H1 (cell line): ENCODE measurements at regions of chr9 and their contacts with region 1.

Region 1: DNA sequence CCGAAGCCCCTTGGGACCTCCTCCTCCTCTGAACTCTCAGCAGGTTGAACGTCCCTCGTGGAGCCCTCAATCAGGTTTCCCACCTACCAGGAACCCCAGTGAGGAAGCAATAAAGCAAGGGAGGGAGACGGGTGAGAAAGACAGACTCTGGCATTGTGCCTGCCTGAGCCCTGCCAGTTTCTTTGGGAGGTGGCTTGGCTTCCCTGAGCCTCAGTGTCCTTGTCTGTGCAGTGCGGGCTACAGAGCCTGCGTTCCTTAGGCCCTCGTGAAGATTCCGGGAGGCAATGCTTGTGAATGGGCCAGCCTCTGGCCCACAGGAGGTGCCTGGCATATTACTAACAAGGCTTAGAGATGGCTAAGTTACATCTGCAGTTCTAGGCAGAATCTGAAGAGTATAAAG is 11.9 kb downstream of the GTF3C5 start:
- DNase-seq: no peak
- H3K4me3 ChIP-seq: no peak overlapping the region
- H3K27ac ChIP-seq: no peak overlapping the region
- H3K4me1 ChIP-seq: no peaks in the 10 kb centered on the region
- H3K27me3 ChIP-seq: no peaks in the 10 kb centered on the region
- CTCF ChIP-seq: no peak
- EP300 ChIP-seq: no peak
- POLR2A ChIP-seq: no peak
- RAD21 ChIP-seq: no peak

Region 2: DNA sequence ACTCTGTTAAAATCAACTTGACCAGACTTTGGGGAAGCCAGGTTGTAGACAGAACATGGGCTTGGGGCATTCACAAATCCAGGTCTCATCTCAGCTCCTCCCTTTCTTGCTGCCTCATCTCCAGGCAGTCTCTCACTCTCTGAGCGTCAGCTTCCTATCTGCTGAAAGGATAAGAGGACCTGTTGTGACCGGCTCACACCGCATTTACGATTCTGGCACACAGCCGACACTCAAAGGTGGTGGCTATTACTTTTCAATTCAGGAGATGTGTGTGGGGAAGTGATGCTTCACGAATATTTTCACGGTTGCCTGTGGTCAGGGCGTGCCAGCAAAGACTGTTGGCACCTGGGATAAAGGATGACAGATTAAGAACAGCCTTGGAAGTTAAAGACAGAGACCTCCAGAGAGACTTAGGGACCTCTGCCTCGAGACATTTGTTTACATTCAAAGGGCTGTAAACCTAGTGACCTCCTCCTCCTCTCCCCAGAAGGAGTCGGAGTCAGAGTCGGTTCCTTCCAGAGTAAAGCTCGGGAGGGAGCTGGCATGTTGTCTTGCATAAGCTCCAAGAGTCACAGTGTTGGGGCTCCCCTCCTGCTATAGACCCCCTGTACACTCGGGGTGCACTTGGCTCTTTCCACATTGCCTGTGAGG is 247.8 kb before region 1 on chr9:
- CTCF ChIA-PET with region 1: no interaction called
- POLR2A ChIA-PET with region 1: no interaction called
- DNase-seq: no peak
- H3K4me3 ChIP-seq: no peak overlapping the region
- H3K27ac ChIP-seq: no peak overlapping the region
- H3K4me1 ChIP-seq: no peaks in the 10 kb centered on the region; a peak in 1 of 7 replicates
- H3K27me3 ChIP-seq: peaks cover 0 to 69% (median 53%) of the 10 kb centered on the region in 4 experiments; a peak in 6 of 7 replicates
- CTCF ChIP-seq: no peak
- EP300 ChIP-seq: no peak
- POLR2A ChIP-seq: no peak
- RAD21 ChIP-seq: no peak

Region 3: GRCh38 chr9:133030317-133031129 is 12.2 kb before region 1 on chr9 and contains the start of gene GTF3C5:
- CTCF ChIA-PET with region 1: interaction called, 17 read pairs
- POLR2A ChIA-PET with region 1: interaction called, 8 read pairs
- DNase-seq: peak; percentile 89 to 91
- H3K4me3 ChIP-seq: peak within 1 kb of the TSS; percentile 95 to 99 (median 98)
- H3K27ac ChIP-seq: peak within 1 kb of the TSS; percentile 87
- H3K4me1 ChIP-seq: peaks cover 2 to 10% (median 5%) of the 10 kb centered on the region in 4 experiments; a peak in 6 of 7 replicates
- H3K27me3 ChIP-seq: no peaks in the 10 kb centered on the region; a peak in 1 of 7 replicates
- CTCF ChIP-seq: no peak
- EP300 ChIP-seq: peak in 1 of 2 experiments; percentile 42; a peak in 1 of 3 replicates
- POLR2A ChIP-seq: peak; percentile 61 to 72; a peak in 2 of 3 replicates
- RAD21 ChIP-seq: no peak; a peak in 1 of 4 replicates
- total RNA-seq, gene GTF3C5: 87.1 and 89.4 TPM in 2 replicates

Region 4: GRCh38 chr9:133060417-133060841 is 17.8 kb after region 1 on chr9:
- CTCF ChIA-PET with region 1: interaction called, 10 read pairs
- POLR2A ChIA-PET with region 1: interaction called, 4 read pairs
- DNase-seq: no peak
- H3K4me3 ChIP-seq: no peak overlapping the region
- H3K27ac ChIP-seq: no peak overlapping the region
- H3K4me1 ChIP-seq: peaks cover 6 to 23% (median 13%) of the 10 kb centered on the region in 4 experiments
- H3K27me3 ChIP-seq: no peaks in the 10 kb centered on the region
- CTCF ChIP-seq: no peak
- EP300 ChIP-seq: no peak
- POLR2A ChIP-seq: no peak
- RAD21 ChIP-seq: no peak